ENCODE measurements at regions of chr7 and their contacts with region 1.

Region 1: GRCh38 chr7:25894902-25895791 is 256.9 kb upstream of the NFE2L3 start:
- DNase-seq: peak; percentile 68 to 86 (median 79)
- H3K4me3 ChIP-seq: peak overlapping the region in 2 of 4 donors; percentile 14 to 52
- H3K27ac ChIP-seq: peak overlapping the region in 3 of 5 donors; percentile 55 to 79 (median 56)
- H3K4me1 ChIP-seq: peaks cover 3 to 21% of the 10 kb centered on the region in 2 donors
- H3K27me3 ChIP-seq: no peaks in the 10 kb centered on the region
- CTCF ChIP-seq: peak; percentile 55 to 73 (median 66)
- POLR2A ChIP-seq: peak in 1 of 2 donors; percentile 32

Region 2: GRCh38 chr7:26061688-26062150 is 166.6 kb after region 1 on chr7:
- intact Hi-C with region 1: loop called (anchors 5 kb)
- DNase-seq: peak; percentile 57 to 88 (median 74)
- H3K4me3 ChIP-seq: no peak overlapping the region
- H3K27ac ChIP-seq: no peak overlapping the region
- H3K4me1 ChIP-seq: no peaks in the 10 kb centered on the region
- H3K27me3 ChIP-seq: peaks cover 4% of the 10 kb centered on the region
- CTCF ChIP-seq: peak; percentile 64 to 86 (median 76)
- POLR2A ChIP-seq: no peak